ENCODE measurements at regions of chr10 and their contacts with region 1.

Region 1: DNA sequence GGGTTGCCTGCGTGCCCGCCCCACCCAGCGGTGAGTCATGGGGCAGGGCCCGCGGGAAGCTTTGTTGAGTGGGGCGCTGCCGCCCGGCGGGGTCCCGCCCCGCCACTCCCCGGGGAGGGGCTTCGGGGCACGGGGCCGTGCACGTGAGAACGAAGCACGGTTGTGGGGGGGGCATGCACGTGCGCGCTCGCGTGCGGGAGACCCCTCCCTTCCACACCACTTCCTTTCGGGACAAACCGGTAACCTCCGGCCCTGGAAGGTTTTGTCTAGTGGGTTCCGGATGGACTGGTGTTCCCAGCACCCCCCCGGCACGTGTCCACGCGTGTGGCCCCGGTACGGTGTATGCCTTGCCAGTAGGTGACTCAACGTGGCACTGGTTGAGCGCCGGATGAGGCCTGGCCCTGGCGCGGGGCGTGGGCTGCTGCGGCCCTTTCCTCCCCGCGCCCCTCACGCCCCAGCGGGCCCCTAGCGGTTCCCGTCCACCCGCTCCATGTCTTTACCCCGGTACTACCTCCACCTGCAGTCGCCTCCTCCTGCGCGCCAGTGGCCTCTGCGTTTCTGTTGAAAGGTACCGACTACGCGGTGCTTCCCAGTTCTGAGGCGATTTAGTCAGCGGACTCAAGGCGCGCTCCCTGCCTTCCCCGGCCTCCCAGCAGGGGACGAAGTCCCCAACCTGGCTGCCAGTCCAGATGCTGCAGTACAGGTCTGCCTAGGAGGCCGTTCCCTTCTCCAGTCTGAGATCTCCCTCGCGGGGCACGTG is 3.1 kb downstream of the ADIRF start:
- DNase-seq: peak; percentile 92 to 96 (median 93)
- H3K4me3 ChIP-seq: peak overlapping the region; percentile 3 to 68
- H3K4me3 Mint-ChIP-seq: peak overlapping the region; percentile 81 to 88 (median 84)
- H3K27ac ChIP-seq: peak overlapping the region; percentile 76
- H3K27ac Mint-ChIP-seq: peak overlapping the region; percentile 90 to 96 (median 93)
- H3K4me1 ChIP-seq: peaks cover 44% of the 10 kb centered on the region
- H3K4me1 Mint-ChIP-seq: peaks cover 19 to 52% (median 31%) of the 10 kb centered on the region in 4 donors
- H3K27me3 ChIP-seq: no peaks in the 10 kb centered on the region
- H3K27me3 Mint-ChIP-seq: peaks cover 0 to 1% of the 10 kb centered on the region in 2 donors

Region 2: DNA sequence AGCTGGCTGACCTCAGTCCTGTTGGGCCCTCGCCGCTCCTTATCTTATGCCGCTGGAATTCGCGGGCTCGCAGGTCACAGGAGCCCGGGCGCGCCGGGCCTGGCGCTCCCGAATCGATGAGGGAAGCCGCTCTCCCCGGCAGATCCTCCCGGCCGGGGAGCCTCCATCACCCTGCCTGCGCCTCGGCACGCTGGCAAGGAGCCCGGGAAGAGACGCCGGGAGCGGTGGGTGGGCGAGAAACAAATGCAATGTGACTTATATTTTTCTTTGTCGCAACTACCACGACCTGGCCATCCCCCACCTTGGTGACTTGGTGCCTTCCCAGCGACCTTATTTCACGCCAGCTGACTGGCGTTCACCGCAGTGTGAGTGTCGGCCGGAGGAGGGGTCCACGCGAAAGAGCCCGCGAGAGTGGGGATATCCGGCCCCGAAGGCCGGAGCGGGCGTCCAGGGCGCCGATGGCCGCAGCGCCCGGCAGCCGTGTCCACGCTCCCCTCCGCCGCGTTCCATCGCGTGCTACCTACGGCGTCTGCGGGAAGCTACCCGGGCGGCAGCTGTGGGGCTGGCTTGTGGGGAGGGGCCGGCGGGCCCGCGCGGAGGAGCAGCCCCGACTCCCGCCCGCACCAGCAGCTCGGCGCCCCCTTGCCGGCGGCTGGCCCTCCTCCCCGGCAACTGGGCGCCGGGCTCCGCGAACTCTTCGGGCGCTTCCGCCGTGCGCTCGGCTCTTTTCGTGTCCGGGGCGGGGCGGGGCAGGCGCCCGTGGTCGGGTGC is 215.5 kb before region 1 on chr10:
- CTCF ChIA-PET with region 1: no interaction called
- POLR2A ChIA-PET with region 1: interaction called, 6 read pairs
- intact Hi-C with region 1: loop called (anchors 1 kb)
- DNase-seq: peak; percentile 79 to 90 (median 87)
- H3K4me3 ChIP-seq: peak overlapping the region in 1 of 2 donors; percentile 68
- H3K4me3 Mint-ChIP-seq: peak overlapping the region; percentile 85 to 92 (median 90)
- H3K27ac ChIP-seq: peak overlapping the region; percentile 66
- H3K27ac Mint-ChIP-seq: peak overlapping the region in 6 of 7 donors; percentile 73 to 90 (median 86)
- H3K4me1 ChIP-seq: peaks cover 24% of the 10 kb centered on the region
- H3K4me1 Mint-ChIP-seq: peaks cover 25 to 42% (median 33%) of the 10 kb centered on the region in 4 donors
- H3K27me3 ChIP-seq: no peaks in the 10 kb centered on the region
- H3K27me3 Mint-ChIP-seq: no peaks in the 10 kb centered on the region

Region 3: DNA sequence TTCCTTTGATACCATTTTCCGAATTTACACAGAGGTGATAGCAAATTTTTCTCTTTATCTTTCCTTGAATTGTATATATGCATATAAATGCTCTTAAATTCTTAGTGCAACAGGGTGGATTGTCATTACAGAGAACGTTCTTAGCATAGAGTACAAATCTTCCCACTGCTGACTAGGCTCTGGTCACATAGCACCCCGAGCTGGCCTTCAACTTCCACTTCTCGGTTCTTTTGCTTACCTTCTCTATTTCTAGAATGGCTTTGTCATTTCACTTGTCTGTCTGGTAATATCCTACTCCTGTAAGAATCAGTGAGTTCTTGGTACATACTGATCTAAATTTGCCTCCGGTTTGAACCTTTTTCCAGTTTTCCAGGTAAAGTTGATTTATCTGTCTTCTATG is 10.3 kb after region 1 on chr10:
- CTCF ChIA-PET with region 1: no interaction called
- POLR2A ChIA-PET with region 1: no interaction called
- intact Hi-C with region 1: no loop called
- DNase-seq: no peak
- H3K4me3 ChIP-seq: no peak overlapping the region
- H3K4me3 Mint-ChIP-seq: no peak overlapping the region
- H3K27ac ChIP-seq: no peak overlapping the region
- H3K27ac Mint-ChIP-seq: no peak overlapping the region
- H3K4me1 ChIP-seq: no peaks in the 10 kb centered on the region
- H3K4me1 Mint-ChIP-seq: no peaks in the 10 kb centered on the region
- H3K27me3 ChIP-seq: no peaks in the 10 kb centered on the region
- H3K27me3 Mint-ChIP-seq: peaks cover 0 to 4% of the 10 kb centered on the region in 2 donors